ENCODE measurements at regions of chr1 and their contacts with region 1.

Region 1: DNA sequence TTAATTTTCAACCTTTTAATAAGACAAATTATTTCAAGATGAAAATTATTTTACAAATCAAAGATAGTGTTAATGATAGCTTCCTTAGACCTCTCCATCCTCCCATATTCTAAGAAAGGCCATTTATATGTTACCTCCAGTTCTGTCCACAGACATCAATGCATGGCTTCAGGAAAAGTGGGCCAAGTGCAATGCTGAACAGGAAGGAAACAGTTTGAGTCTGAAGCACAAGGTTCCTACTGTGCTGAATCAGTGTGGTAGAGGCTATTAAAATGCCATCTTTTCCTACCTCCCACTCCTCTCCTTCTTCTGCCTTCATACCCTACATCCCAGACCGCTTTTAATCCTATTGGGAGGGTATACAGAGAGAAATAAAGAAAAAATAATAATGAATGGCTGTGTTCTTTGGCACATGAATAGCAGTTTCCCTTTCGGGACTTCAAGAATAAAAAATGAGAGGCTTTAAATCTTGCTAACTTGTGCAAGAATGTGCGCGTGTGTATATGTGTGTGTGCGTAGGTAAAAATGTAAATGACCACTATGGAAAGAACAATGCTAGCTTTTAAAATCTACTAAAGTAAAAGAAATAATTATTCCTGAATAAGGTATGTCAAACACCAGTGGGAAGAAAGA is 62.6 kb upstream of the C1orf105 start:
- DNase-seq: no peak
- H3K4me3 Mint-ChIP-seq: peak overlapping the region; percentile 7
- H3K27ac Mint-ChIP-seq: peak overlapping the region; percentile 84
- H3K4me1 Mint-ChIP-seq: peaks cover 45% of the 10 kb centered on the region
- H3K27me3 Mint-ChIP-seq: no peaks in the 10 kb centered on the region

Region 2: GRCh38 chr1:172269644-172270043 is 88.2 kb before region 1 on chr1:
- intact Hi-C with region 1: loop called (anchors 1 kb)
- DNase-seq: no peak
- H3K4me3 Mint-ChIP-seq: peak overlapping the region; percentile 29
- H3K27ac Mint-ChIP-seq: peak overlapping the region; percentile 88
- H3K4me1 Mint-ChIP-seq: peaks cover 44% of the 10 kb centered on the region
- H3K27me3 Mint-ChIP-seq: no peaks in the 10 kb centered on the region

Region 3: GRCh38 chr1:172343240-172344160 is 14.4 kb before region 1 on chr1:
- intact Hi-C with region 1: loop called (anchors 1 kb)
- DNase-seq: no peak
- H3K4me3 Mint-ChIP-seq: peak overlapping the region; percentile 47
- H3K27ac Mint-ChIP-seq: peak overlapping the region; percentile 12
- H3K4me1 Mint-ChIP-seq: peaks cover 43% of the 10 kb centered on the region
- H3K27me3 Mint-ChIP-seq: no peaks in the 10 kb centered on the region

Region 4: GRCh38 chr1:172380441-172381244 is 22.8 kb after region 1 on chr1:
- intact Hi-C with region 1: loop called (anchors 1 kb)
- DNase-seq: peak; percentile 80
- H3K4me3 Mint-ChIP-seq: peak overlapping the region; percentile 57
- H3K27ac Mint-ChIP-seq: peak overlapping the region; percentile 86
- H3K4me1 Mint-ChIP-seq: peaks cover 18% of the 10 kb centered on the region
- H3K27me3 Mint-ChIP-seq: no peaks in the 10 kb centered on the region

Region 5: DNA sequence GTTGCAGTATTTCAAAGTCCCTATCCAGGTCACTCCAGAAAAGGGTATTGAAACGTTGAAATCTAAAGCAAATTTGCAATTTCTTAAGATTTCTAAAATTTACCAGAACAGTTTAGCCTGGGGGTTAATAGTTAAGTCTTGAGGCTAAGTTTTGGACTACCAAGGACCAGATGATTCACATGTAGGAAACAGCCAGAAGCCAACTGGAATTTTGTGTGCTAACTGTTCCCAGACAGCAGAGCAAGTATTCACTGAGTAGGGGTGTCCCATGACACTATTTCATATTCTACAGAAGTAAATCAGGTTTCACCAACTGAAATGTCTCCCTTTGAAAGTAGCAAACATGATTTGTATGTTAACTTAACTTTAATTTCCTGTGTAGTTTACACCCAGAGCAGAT is 51.1 kb after region 1 on chr1:
- intact Hi-C with region 1: no loop called
- DNase-seq: no peak
- H3K4me3 Mint-ChIP-seq: no peak overlapping the region
- H3K27ac Mint-ChIP-seq: no peak overlapping the region
- H3K4me1 Mint-ChIP-seq: peaks cover 2% of the 10 kb centered on the region
- H3K27me3 Mint-ChIP-seq: peaks cover 6% of the 10 kb centered on the region

Region 6: GRCh38 chr1:172699111-172699510 is 341.2 kb after region 1 on chr1:
- intact Hi-C with region 1: loop called (anchors 2 kb)
- DNase-seq: peak; percentile 92
- H3K4me3 Mint-ChIP-seq: peak overlapping the region; percentile 82
- H3K27ac Mint-ChIP-seq: peak overlapping the region; percentile 90
- H3K4me1 Mint-ChIP-seq: peaks cover 49% of the 10 kb centered on the region
- H3K27me3 Mint-ChIP-seq: no peaks in the 10 kb centered on the region

Measured in activated CD4-positive, alpha-beta T cell treated with anti-CD3 and anti-CD28 coated beads, Interleukin-2, amount 10 ng/mL, durations not matched to agents 24 days and 14 days (primary cell).